ENCODE measurements at regions of chr22 and their contacts with region 1.

Region 1: DNA sequence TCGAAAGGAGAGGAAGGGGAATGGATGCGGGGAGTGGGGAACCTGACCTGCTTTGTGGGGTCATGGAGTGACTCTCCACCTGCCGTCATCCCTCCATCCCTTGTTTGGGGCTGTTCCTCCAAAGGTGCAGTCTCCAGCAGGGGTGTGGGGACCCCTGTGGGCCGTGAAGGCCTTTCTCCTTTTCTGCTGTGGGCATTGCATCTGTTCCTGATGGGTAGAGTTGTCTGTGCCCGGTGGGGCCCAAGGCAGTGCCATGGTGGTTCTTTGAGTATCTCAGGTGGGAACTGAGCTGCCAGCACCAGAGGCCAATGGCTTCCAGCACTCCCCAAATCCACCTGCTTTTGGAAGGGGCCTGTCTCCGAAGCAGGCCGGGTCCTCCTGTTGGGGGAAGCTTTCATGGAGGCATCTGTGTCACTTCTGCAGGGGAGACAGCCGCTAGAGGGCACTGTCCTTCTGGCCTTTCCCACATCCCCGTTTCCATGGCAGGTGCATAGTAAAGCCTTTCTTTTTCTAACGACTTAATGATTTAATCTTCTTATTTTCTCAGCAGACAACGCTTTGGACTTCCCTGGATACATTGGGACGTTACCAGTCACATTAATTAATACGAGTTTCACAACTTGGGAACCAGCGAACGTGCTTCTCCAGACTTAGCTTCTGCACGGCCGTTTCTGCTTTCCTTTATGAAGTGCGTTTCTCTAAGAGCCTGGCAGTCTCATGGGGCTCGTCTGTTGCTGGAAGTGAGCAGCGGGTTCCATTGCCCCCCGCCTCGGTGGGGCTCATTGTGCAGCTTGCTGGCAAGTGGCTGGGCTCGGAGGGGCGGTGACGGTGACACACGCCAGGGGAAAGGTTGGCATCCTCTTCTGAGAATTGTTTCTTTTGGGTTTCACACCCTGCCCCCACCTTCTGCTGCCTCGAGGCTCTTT is 57.1 kb downstream of the PARVB start:
- DNase-seq: peak; percentile 65 to 81 (median 76)
- ATAC-seq: peak in 1 of 4 donors; percentile 42
- H3K4me3 ChIP-seq: no peak overlapping the region
- H3K27ac ChIP-seq: no peak overlapping the region
- H3K4me1 ChIP-seq: peaks cover 0 to 32% (median 7%) of the 10 kb centered on the region in 12 donors
- H3K27me3 ChIP-seq: no peaks in the 10 kb centered on the region
- CTCF ChIP-seq: peak; percentile 73 to 93 (median 85)
- POLR2A ChIP-seq: no peak

Region 2: DNA sequence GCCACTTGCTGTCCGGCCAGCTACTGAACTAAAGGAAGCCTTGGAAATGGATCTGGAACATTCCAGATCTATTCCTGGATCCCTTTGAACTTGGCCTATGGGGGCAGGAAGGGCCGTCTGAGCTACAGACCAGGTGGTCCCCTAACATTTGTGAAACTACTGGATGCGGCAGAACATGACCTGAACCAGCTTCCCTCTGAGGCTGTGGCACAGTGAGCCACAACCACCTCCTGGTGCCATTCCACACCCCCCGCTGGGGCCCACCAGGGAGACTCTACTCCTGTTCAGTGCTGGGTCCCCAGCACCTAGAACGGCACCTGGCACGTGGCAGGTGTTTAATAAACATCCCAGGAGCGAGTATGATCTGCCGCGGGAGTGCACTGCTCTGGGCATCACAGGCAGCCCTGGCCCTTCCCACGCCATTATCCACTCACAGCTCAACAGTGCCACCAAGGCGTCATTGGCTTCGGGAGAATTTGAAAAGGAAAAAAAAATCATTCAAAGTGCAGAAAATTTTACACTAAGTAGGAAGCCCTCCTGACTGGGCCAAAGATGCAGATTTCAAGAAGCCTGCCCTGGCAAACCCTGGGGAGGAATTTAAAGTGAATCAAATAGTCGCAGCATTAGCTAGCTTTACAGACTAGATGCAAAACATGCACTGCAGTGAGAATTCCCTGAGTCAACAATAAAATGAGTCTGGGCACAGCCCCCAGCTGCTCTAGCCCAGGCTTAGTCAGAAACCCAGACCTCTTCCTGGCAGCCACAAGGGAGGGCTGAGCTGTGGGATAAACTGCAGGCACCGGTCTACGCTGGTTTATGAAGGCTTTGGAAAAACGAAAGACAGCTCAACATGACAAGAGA is 254.8 kb before region 1 on chr22:
- intact Hi-C with region 1: loop called in 1 of 10 experiments (anchors 5 kb)
- DNase-seq: peak in 1 of 5 donors; percentile 25
- ATAC-seq: no peak
- H3K4me3 ChIP-seq: no peak overlapping the region
- H3K27ac ChIP-seq: peak overlapping the region in 1 of 12 donors; percentile 1
- H3K4me1 ChIP-seq: peaks cover 0 to 28% (median 18%) of the 10 kb centered on the region in 12 donors
- H3K27me3 ChIP-seq: peaks cover 0 to 22% (median 0%) of the 10 kb centered on the region in 9 donors
- CTCF ChIP-seq: peak in 8 of 12 donors; percentile 7 to 41 (median 27)
- POLR2A ChIP-seq: no peak

Region 3: DNA sequence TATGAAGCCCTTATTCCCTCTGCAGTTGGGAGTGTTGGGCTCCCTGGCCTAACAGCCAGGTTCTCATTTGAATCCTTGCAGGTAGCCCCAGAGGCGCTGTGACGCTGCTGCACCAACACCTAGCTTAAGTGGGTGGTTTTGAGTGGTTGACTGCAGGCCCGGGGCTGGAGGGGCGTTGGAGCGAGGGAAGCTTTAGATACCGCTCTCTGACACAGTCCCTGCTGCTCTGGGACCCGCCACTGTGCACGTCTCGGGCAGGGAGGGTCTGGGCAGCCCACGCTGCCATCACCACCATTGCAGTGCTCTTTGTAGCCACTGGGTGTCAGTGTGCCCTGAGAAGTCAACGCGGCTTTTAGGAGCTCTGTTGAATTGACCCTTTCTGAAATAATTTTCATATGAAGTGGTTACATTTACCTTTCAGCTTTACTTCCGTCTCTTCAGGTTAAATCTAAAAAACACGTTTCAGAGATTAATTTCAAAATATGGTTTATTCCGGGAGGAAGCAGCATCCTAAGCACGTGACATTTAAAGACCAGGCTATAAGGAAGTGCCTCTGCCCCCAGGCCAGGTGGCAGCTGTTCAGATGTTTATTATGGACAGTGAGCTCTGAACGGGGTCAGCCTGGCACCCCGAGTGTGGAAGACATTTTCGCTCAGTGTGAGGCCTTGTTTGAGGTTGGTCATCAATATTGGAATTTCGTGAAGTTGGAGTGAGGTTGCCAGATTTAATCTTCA is 88.0 kb before region 1 on chr22:
- intact Hi-C with region 1: loop called in 9 of 10 experiments (anchors 1 to 5 kb)
- DNase-seq: peak; percentile 38 to 73 (median 56)
- ATAC-seq: peak in 3 of 4 donors; percentile 62 to 77 (median 70)
- H3K4me3 ChIP-seq: no peak overlapping the region
- H3K27ac ChIP-seq: peak overlapping the region in 1 of 12 donors; percentile 61
- H3K4me1 ChIP-seq: peaks cover 0 to 31% (median 9%) of the 10 kb centered on the region in 12 donors
- H3K27me3 ChIP-seq: no peaks in the 10 kb centered on the region
- CTCF ChIP-seq: peak; percentile 90 to 98 (median 96)
- POLR2A ChIP-seq: no peak

Region 4: DNA sequence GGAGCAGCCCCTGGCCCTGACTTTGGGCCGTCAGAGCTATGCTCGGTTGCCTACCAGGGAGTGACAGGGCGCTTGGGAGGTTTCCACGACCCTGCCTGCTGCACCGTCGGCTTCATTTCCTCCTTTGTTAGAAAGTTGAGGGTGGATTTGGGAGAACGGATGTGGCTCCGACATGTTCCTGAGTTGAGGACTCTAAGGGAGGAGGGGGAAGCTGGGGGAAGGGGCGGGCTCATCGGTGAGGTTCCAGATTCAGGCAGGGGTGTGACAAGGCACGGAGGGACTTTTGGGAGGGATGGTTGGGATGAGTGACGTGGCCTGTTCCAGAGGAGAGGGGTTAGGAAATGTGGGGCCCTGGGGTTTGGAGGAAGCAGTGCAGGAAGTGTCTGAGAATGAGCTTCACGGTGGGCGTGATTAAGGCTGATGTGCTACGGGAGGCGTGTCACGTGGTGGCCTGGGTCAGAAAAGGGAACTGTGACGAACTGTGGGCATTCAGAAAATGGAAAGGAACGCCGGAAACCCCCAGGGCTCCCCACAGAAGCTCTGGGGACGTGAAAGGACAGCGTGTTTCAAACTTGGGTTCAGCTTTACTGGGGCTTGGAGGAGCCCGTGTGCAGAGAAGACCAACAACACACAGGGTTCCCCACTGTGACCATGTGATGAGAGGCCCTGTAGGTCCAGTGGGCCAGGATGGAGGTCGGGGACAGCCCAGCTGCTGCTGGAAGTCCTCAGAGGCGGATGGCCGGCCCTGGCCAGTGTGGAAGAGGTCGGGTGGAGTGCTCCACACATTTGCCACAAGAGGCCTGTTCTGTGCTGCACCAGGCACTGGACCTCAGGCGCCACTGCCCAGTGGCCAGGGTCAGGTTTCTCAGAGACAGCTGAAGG is 54.3 kb before region 1 on chr22:
- intact Hi-C with region 1: loop called in 6 of 10 experiments (anchors 2 to 5 kb)
- DNase-seq: peak; percentile 85 to 90 (median 87)
- ATAC-seq: peak; percentile 65 to 85 (median 72)
- H3K4me3 ChIP-seq: peak overlapping the region in 10 of 12 donors; percentile 54 to 92 (median 76)
- H3K27ac ChIP-seq: peak overlapping the region; percentile 86 to 99 (median 97)
- H3K4me1 ChIP-seq: peaks cover 20 to 95% (median 58%) of the 10 kb centered on the region in 12 donors
- H3K27me3 ChIP-seq: no peaks in the 10 kb centered on the region
- CTCF ChIP-seq: no peak
- POLR2A ChIP-seq: no peak

Region 5: DNA sequence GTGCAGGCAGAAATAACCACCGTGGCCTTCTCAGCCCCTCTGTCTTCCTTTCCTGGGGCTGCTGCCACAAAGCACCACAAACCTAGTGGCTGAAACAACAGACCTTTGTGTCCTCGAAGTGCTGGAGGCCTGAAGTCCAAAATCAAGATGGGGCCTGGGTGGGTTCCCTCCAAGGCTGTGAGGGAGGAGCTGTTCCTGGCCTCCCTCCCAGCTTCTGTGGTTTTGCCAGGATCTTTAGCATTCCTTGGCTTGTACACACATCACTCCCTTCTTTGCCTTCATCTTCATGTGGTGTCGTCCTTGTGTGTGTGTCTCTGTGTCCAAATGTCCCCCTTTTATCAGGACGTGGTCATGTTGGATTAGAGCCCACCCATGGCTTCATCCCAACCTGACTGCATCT is 70.5 kb after region 1 on chr22:
- intact Hi-C with region 1: no loop called
- DNase-seq: no peak
- ATAC-seq: no peak
- H3K4me3 ChIP-seq: no peak overlapping the region
- H3K27ac ChIP-seq: no peak overlapping the region
- H3K4me1 ChIP-seq: peaks cover 0 to 11% (median 0%) of the 10 kb centered on the region in 12 donors
- H3K27me3 ChIP-seq: no peaks in the 10 kb centered on the region
- CTCF ChIP-seq: no peak
- POLR2A ChIP-seq: no peak

Region 6: DNA sequence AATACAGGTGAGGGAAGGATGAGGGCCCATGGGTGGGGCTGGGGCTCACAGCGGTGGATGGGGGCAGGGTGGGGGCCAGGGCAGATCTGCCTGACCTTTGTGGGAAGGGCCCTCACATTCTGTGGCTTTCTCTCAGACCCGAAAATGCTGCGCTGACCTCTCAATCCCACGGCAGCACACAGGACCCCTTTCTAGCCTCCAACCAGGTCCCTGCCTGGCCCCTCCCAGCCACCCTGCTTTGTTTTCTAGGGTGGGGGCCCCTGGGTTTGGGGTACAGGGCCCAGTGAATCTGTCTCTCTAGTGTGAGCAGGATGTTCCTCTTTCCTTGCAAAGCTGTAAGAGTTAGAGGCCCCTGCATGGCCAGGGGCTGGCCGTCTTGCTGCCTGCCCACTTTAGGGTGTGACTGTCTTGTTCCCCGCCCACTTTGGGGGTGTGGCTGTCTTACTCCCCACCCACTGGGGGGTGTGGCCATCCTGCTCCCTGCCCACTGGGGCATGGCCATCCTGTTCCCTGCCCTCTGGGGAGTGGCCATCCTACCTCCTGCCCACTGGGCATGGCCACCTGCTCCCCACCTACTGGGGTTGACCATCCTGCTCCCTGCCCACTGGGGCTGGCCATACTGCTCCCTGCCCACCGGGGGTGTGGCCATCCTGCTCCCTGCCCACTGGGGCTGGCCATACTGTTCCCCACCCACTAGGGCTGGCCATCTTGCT is 111.1 kb after region 1 on chr22:
- intact Hi-C with region 1: no loop called
- DNase-seq: no peak
- ATAC-seq: peak in 2 of 4 donors; percentile 13 to 58
- H3K4me3 ChIP-seq: no peak overlapping the region
- H3K27ac ChIP-seq: no peak overlapping the region
- H3K4me1 ChIP-seq: peaks cover 0 to 5% (median 0%) of the 10 kb centered on the region in 12 donors
- H3K27me3 ChIP-seq: peaks cover 0 to 15% (median 0%) of the 10 kb centered on the region in 9 donors
- CTCF ChIP-seq: no peak
- POLR2A ChIP-seq: no peak

Region 7: GRCh38 chr22:44272401-44272771 is 191.2 kb after region 1 on chr22:
- intact Hi-C with region 1: no loop called
- DNase-seq: no peak
- ATAC-seq: no peak
- H3K4me3 ChIP-seq: no peak overlapping the region
- H3K27ac ChIP-seq: no peak overlapping the region
- H3K4me1 ChIP-seq: no peaks in the 10 kb centered on the region
- H3K27me3 ChIP-seq: peaks cover 0 to 4% (median 0%) of the 10 kb centered on the region in 9 donors
- CTCF ChIP-seq: no peak
- POLR2A ChIP-seq: no peak

Region 8: DNA sequence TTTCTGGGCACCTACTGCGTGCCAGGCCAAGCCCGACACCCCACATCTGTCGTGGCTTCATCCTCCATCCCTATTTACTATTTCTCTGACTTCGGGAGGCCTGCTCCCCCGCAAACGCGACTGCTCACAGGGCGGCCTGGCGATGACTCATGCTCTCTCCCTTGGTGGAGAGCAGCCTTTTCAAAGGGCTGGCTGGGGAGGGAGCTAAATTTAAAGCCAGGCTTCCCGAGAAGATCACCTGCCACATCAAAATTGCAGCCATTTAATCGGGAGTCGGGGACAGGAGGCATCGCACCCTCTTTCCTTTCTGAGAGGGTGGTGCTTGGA is 256.4 kb after region 1 on chr22:
- intact Hi-C with region 1: loop called in 2 of 10 experiments (anchors 10 kb)
- DNase-seq: peak in 2 of 5 donors; percentile 51 to 74
- ATAC-seq: peak in 3 of 4 donors; percentile 31 to 74 (median 59)
- H3K4me3 ChIP-seq: no peak overlapping the region
- H3K27ac ChIP-seq: peak overlapping the region in 1 of 12 donors; percentile 9
- H3K4me1 ChIP-seq: peaks cover 0 to 20% (median 4%) of the 10 kb centered on the region in 12 donors
- H3K27me3 ChIP-seq: peaks cover 0 to 12% (median 3%) of the 10 kb centered on the region in 9 donors
- CTCF ChIP-seq: no peak
- POLR2A ChIP-seq: no peak

Region 9: GRCh38 chr22:44620129-44620840 is 539.1 kb after region 1 on chr22:
- intact Hi-C with region 1: loop called in 7 of 10 experiments (anchors 2 to 10 kb)
- DNase-seq: peak; percentile 78 to 88 (median 81)
- ATAC-seq: peak; percentile 48 to 80 (median 56)
- H3K4me3 ChIP-seq: peak overlapping the region in 4 of 12 donors; percentile 8 to 35 (median 16)
- H3K27ac ChIP-seq: peak overlapping the region in 5 of 12 donors; percentile 38 to 61 (median 44)
- H3K4me1 ChIP-seq: peaks cover 0 to 22% (median 4%) of the 10 kb centered on the region in 12 donors
- H3K27me3 ChIP-seq: peaks cover 0 to 14% (median 2%) of the 10 kb centered on the region in 9 donors
- CTCF ChIP-seq: no peak
- POLR2A ChIP-seq: no peak